IMR-90 (cell line): ENCODE measurements at regions of chr9 and their contacts with region 1.

Region 1: DNA sequence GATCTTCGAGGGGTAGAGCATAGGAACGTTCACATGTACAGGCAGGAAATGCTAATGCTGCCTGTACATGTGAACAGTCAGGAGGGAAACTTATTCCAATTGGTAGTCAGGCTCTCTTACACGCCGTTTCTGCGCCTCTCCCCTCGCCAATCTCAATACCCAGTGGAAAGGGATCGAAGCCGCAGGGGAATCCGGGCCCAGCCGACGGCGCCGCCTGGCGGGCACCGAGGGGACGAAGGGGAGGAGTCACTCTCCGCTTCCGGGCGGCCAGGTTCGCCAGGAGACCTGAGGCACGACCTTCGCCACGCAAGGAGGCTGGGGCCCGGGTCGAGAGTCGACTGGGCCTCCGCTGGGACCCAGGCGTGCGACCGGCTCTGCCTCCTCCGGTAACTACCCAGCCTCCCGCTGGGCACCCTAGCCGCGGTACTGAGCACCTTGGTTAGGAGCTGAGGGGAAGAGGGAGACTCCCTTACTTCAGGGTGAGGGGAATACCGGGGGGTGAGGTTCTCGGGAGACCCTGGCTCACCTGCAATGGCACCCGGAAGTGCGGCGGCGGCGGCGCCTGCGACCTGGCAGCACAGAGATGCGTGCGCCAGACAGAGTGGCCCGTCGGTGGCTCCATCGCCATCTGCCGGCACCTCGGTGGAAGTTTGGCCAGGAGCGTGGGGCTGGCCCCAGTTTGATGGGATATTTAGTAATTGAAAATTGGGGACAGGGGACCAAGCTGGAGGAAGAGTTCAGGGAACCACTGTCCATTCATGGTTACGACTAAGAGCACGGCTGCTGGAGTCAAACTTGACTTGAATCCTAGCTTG is at the start of gene PIGO:
- DNase-seq: peak; percentile 76
- ATAC-seq: peak; percentile 97
- H3K4me3 ChIP-seq: peak within 1 kb of the TSS; percentile 89
- H3K27ac ChIP-seq: peak within 1 kb of the TSS; percentile 87
- H3K4me1 ChIP-seq: no peaks in the 10 kb centered on the region
- H3K27me3 ChIP-seq: no peaks in the 10 kb centered on the region
- CTCF ChIP-seq: peak; percentile 90
- POLR2A ChIP-seq: no peak
- RAD21 ChIP-seq: peak; percentile 72
- total RNA-seq, gene PIGO: 8.1 and 9.3 TPM in 2 replicates

Region 2: DNA sequence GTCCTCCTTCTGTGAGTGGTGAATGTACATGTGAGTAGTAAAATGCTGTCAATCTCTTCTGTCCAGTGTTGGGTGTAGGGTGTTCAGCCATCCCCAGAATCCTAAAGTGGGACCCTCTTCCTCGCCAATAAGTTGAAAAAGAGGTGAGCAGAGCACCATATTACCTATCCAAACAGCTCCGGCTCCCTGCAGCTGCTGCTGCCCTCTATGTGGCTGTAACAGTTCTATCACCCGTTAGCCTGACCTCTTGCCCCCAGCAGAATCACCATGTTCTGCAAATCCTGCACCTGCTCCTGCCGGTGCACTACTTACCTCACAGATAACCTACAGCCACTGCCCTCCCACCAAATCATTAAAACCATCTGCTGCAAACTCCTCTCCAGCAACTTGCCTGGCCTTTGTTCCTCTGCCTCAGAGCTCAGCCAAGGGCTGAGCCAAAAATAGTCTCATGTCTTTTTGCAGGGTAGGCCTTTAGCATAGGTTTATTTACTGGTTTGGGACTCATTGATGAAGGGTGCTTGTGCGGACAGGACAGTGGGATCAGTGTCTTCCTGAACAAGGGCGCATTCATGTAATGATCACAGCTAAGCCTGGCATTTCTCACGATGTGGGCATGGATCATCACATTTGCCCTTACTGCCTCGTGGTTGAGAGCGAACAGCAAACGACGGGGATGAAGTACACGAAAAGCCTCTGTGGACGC is 336.7 kb before region 1 on chr9:
- CTCF ChIA-PET with region 1: no interaction called
- POLR2A ChIA-PET with region 1: no interaction called
- dilution Hi-C with region 1: no loop called
- in situ Hi-C with region 1: no loop called
- intact Hi-C with region 1: loop called (anchors 2 kb)
- DNase-seq: no peak
- ATAC-seq: no peak
- H3K4me3 ChIP-seq: no peak overlapping the region
- H3K27ac ChIP-seq: no peak overlapping the region
- H3K4me1 ChIP-seq: no peaks in the 10 kb centered on the region
- H3K27me3 ChIP-seq: peaks cover 18% of the 10 kb centered on the region
- CTCF ChIP-seq: no peak
- POLR2A ChIP-seq: no peak
- RAD21 ChIP-seq: no peak

Region 3: DNA sequence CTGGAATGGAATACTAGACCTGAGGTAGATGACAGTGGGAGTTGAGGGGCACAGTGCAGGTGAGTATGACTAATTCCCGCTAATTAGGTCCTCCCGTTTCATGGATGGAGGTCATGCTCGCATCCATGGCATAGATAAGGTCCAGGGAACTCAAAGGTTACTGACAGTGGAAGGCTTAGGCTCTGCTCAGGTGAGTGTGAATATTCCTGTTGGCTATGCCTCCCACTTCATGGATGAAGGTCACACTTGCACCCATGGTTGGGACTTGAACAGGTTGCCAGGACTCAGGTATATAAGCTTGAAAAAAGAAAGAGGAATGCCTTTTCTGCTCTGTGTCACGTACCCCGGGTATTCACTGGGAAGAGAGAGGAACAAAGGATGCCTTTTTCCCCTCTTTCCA is 45.8 kb after region 1 on chr9:
- CTCF ChIA-PET with region 1: no interaction called
- POLR2A ChIA-PET with region 1: no interaction called
- dilution Hi-C with region 1: no loop called
- in situ Hi-C with region 1: no loop called
- intact Hi-C with region 1: no loop called
- DNase-seq: no peak
- ATAC-seq: no peak
- H3K4me3 ChIP-seq: no peak overlapping the region
- H3K27ac ChIP-seq: no peak overlapping the region
- H3K4me1 ChIP-seq: no peaks in the 10 kb centered on the region
- H3K27me3 ChIP-seq: peaks cover 2% of the 10 kb centered on the region; the same call in 1 of the 2 replicates
- CTCF ChIP-seq: no peak
- POLR2A ChIP-seq: no peak
- RAD21 ChIP-seq: no peak